Activated T-helper 1 cell treated with anti-CD3 and anti-CD28 coated beads, Interleukin-12 subunit alpha, Interleukin-12 subunit beta, Interleukin-2, Interleukin-4 antibody, amounts not matched to agents 30 ng/mL and 10 ng/mL and 1 ng/mL, durations not matched to agents 14 hours and 24 hours and 36 hours (primary cell): ENCODE measurements at regions of chr11 and their contacts with region 1.

Region 1: GRCh38 chr11:66222358-66223149 is 45.9 kb upstream of the RAB1B start:
- DNase-seq: peak; percentile 92
- H3K4me3 Mint-ChIP-seq: peak overlapping the region; percentile 20
- H3K27ac Mint-ChIP-seq: peak overlapping the region; percentile 97
- H3K4me1 Mint-ChIP-seq: peaks cover 20% of the 10 kb centered on the region
- H3K27me3 Mint-ChIP-seq: no peaks in the 10 kb centered on the region

Region 2: DNA sequence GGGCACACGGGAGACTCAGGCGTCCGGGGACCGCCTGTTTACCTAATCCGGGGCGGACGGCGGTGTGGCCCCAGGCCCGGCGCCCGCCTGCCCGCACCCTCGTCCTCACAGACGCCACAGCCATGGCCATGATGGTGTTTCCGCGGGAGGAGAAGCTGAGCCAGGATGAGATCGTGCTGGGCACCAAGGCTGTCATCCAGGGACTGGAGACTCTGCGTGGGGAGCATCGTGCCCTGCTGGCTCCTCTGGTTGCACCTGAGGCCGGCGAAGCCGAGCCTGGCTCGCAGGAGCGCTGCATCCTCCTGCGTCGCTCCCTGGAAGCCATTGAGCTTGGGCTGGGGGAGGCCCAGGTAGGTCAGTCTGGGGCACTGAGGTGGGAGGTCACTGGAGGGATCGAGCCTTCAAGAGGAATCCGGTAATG is 35.9 kb after region 1 on chr11:
- intact Hi-C with region 1: loop called (anchors 1 kb)
- DNase-seq: no peak
- H3K4me3 Mint-ChIP-seq: peak overlapping the region; percentile 93
- H3K27ac Mint-ChIP-seq: peak overlapping the region; percentile 61
- H3K4me1 Mint-ChIP-seq: peaks cover 21% of the 10 kb centered on the region
- H3K27me3 Mint-ChIP-seq: no peaks in the 10 kb centered on the region

Region 3: DNA sequence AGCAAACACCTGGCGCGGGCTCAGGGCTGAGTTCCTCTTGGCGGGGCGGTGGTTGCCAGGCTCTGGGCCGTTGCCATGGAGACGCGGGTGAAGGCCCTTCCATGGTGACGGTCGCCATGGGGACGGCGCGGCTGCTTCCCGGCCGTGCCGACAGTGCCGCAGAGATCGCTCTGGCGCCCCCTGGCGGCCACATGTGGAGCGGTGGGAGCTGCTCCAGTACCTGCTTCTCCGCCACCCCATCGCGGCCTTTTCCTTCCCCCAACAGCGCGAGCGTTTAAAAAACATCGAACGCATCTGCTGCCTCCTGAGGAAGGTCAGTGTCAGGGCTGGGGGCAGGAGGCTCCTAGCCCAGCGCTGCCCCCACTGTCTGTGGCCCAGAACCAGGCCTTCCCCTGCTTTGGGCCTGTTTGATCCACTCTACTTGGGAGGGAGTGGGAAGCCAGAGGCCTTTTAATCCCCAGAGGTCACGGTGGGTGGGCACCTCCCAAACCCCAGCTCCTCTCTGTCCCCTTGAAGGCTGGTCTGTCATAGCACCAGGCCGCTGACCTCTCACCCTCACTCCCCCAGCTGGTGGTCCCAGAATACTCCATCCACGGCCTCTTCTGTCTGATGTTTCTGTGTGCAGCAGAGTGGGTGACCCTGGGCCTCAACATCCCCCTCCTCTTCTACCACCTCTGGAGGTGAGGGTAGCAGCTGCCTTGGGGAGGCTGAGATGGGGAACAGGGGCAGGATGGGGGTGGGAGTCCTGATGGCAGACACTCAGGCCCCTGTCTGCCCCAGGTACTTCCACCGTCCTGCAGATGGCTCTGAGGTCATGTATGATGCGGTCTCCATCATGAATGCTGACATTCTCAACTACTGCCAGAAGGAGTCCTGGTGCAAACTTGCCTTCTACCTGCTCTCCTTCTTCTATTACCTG is 60.2 kb after region 1 on chr11:
- intact Hi-C with region 1: loop called (anchors 1 kb)
- DNase-seq: peak; percentile 98
- H3K4me3 Mint-ChIP-seq: no peak overlapping the region
- H3K27ac Mint-ChIP-seq: peak overlapping the region; percentile 40
- H3K4me1 Mint-ChIP-seq: peaks cover 29% of the 10 kb centered on the region
- H3K27me3 Mint-ChIP-seq: peaks cover 10% of the 10 kb centered on the region

Region 4: DNA sequence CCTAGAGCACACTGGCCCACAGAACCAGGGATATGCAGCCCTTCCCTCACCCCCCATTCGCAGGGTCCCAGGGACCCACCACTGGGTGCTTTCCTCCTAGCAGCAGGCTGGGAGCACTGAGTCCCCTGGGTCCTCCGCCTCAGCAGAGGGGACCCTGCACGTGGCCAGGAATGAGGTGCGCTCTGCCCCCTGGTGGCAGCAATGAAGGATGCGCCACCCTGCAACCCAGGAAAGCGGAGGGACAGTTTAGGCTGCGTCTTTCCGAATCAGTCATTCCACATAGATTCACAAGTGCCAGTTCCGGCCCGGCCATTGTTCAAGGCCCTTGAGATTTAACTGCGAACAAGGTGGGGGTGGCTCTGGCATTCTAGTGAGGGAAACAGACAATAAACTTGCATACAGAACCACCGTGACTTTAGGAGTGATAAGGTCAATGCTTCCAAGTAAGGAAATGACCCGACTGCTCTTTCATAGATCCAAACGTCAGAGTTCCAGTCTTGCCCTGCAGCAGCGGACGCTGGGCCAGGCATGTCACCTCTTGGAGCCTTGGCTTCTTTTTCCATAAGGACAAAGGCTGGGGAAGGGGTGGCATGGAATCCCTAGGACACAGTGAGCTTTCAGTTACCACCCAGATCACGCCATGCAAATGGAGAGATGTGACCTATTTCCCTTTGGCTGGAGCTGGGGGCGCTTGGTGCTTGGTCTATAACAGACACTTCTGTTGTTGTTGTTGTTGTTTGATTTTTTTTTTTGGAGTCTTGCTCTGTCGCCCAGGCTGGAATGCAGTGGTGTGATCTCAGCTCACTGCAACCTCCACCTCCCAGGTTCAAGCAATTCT is 106.0 kb after region 1 on chr11:
- intact Hi-C with region 1: loop called (anchors 1 kb)
- DNase-seq: peak; percentile 73
- H3K4me3 Mint-ChIP-seq: peak overlapping the region; percentile 59
- H3K27ac Mint-ChIP-seq: peak overlapping the region; percentile 61
- H3K4me1 Mint-ChIP-seq: peaks cover 25% of the 10 kb centered on the region
- H3K27me3 Mint-ChIP-seq: no peaks in the 10 kb centered on the region